ENCODE measurements at regions of chr3 and their contacts with region 1.

Region 1: GRCh38 chr3:186540221-186540834 is 3.9 kb downstream of the CRYGS start:
- DNase-seq: peak; percentile 63 to 90 (median 83)
- ATAC-seq: peak; percentile 96
- H3K4me3 ChIP-seq: no peak overlapping the region
- H3K4me3 Mint-ChIP-seq: no peak overlapping the region
- H3K27ac ChIP-seq: no peak overlapping the region
- H3K27ac Mint-ChIP-seq: peak overlapping the region; percentile 7
- H3K4me1 ChIP-seq: peaks cover 6% of the 10 kb centered on the region
- H3K4me1 Mint-ChIP-seq: peaks cover 11% of the 10 kb centered on the region
- H3K27me3 ChIP-seq: no peaks in the 10 kb centered on the region
- H3K27me3 Mint-ChIP-seq: no peaks in the 10 kb centered on the region
- CTCF ChIP-seq: peak; percentile 80

Region 2: GRCh38 chr3:185976977-185977678 is 563.2 kb before region 1 on chr3:
- CTCF ChIA-PET with region 1: interaction called, 86 read pairs
- POLR2A ChIA-PET with region 1: no interaction called
- intact Hi-C with region 1: loop called (anchors 1 kb)
- DNase-seq: peak; percentile 50 to 87 (median 79)
- ATAC-seq: peak; percentile 83
- H3K4me3 ChIP-seq: no peak overlapping the region
- H3K4me3 Mint-ChIP-seq: no peak overlapping the region
- H3K27ac ChIP-seq: no peak overlapping the region
- H3K27ac Mint-ChIP-seq: no peak overlapping the region
- H3K4me1 ChIP-seq: peaks cover 3% of the 10 kb centered on the region
- H3K4me1 Mint-ChIP-seq: peaks cover 7% of the 10 kb centered on the region
- H3K27me3 ChIP-seq: no peaks in the 10 kb centered on the region
- H3K27me3 Mint-ChIP-seq: no peaks in the 10 kb centered on the region
- CTCF ChIP-seq: peak; percentile 84

Region 3: DNA sequence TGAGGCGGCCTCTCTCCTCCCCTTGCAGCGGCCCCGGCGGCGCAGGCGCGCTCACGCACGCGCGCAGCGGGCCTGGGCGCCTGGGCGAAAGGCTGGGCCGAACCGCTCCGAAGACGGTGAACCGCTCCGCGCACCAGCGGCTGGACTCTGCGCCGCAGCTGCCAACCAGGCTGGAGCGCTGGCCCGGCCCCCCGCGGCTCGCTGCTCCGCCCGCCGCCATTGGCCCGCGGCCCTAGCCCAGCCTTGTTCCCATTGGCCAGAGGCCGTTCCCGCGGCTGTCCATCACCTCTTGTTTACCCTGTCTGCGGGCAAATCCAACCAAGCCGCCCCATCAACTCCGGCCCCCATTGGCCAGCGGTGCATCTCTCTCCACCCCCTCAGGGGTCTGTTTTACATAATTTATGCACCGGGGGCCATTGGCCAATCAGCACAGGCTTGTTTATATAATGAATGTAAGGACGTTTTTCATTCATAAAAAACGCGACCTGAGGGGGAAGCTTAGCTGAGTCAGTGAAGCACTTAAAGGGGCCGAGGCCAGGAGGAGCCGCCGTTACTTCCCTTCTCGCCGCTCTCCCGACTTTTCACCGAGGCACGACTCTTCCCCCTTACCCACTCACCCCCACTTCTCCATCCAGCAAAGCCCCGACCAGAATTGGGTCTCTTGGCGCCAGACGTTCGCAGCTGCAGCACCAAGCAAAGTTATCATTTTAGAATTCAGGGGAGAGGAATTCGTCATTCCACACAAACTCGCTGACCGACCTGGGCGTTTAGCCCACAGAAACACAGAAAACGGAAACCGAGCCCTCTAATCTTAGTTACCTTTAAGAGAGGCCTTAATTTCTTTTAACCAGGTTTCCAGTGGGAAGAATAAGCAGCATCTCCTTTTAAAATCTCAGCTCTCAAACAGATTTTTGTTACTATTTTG is 431.1 kb before region 1 on chr3 and contains the start of gene ETV5:
- CTCF ChIA-PET with region 1: interaction called, 3 read pairs
- POLR2A ChIA-PET with region 1: no interaction called
- intact Hi-C with region 1: loop called in 1 of 2 experiments (anchors 5 kb)
- DNase-seq: peak; percentile 71 to 95 (median 85)
- ATAC-seq: peak; percentile 90
- H3K4me3 ChIP-seq: peak within 1 kb of the TSS; percentile 54 to 61
- H3K4me3 Mint-ChIP-seq: peak within 1 kb of the TSS; percentile 90
- H3K27ac ChIP-seq: no peak within 1 kb of the TSS
- H3K27ac Mint-ChIP-seq: peak within 1 kb of the TSS; percentile 78
- H3K4me1 ChIP-seq: peaks cover 34% of the 10 kb centered on the region
- H3K4me1 Mint-ChIP-seq: peaks cover 36% of the 10 kb centered on the region
- H3K27me3 ChIP-seq: peaks cover 33 to 43% of the 10 kb centered on the region in 2 experiments
- H3K27me3 Mint-ChIP-seq: peaks cover 77% of the 10 kb centered on the region
- CTCF ChIP-seq: no peak
- total RNA-seq, gene ETV5: 0.08 TPM in 1 of 2 experiments, not detected in the other

Region 4: DNA sequence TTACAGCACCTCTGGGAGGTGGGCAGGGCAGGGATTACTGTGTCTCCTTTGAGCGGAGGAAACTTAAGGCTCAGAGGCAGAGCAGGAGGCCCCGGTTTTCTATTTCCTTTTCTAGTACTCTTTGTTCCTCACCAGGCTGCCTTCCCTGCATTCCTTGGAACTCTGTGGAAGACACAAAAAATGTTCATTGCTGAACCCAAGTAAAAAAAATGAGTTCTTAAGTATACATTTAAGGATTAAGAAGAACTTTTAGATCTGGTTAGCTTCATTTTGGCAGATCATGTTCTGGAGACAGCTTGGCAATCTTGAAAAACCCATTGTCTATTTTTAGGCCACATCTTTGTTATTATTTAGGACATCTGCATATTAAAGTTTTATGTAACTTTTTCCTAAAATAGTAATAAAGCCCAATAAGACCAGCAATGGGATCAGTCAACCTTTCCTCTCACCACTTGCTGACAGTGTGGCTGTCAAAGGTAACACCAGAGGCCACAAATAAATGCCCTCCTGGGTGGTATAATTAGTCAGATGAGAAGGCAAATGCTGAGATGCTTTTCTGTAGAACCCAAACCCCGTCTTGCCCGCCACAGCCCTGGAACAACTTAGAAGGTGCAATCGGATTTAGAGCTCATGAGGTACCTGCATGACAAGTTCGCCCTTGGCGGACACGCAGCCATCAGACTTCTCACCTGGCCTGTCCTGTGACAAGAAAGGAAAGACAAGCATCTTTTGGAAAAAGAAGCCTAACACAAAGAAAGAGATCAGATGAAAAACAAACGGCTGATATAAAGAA is 275.5 kb before region 1 on chr3:
- CTCF ChIA-PET with region 1: interaction called, 201 read pairs
- POLR2A ChIA-PET with region 1: interaction called, 3 read pairs
- intact Hi-C with region 1: no loop called
- DNase-seq: no peak
- ATAC-seq: no peak
- H3K4me3 ChIP-seq: no peak overlapping the region
- H3K4me3 Mint-ChIP-seq: no peak overlapping the region
- H3K27ac ChIP-seq: no peak overlapping the region
- H3K27ac Mint-ChIP-seq: no peak overlapping the region
- H3K4me1 ChIP-seq: no peaks in the 10 kb centered on the region
- H3K4me1 Mint-ChIP-seq: peaks cover 2% of the 10 kb centered on the region
- H3K27me3 ChIP-seq: no peaks in the 10 kb centered on the region
- H3K27me3 Mint-ChIP-seq: peaks cover 7% of the 10 kb centered on the region
- CTCF ChIP-seq: no peak

Region 5: DNA sequence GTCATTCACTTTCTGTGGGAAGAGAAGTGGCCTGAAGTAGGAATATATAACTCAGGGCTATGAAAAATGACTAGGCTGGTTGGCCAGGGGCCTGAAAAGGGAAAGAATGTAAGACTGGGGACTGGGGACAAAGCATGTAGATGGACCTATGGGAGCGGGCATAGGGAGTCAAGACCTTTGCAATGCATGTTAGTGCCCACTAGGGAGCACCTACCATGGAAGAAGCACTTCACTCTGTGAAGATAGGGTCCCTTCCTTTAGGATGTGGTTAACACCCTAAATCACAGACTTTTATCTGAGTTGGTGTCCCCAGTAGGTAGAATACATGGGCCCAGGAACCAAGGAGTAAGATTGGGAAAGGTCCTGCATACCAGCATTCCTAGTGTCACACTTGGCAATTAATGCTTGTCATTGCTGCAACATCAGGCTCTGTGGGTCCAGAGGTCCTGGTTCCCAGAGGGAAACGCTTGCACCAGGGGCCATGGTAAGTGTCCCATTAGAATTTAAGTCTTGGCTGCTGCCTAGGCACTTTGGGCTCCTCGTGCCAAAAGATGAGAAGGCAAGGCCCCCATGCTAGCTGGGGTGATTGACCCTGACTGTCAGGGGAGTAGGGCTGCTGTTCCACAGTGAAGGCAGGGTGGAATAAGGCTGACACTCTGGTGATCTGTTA is 75.8 kb before region 1 on chr3:
- CTCF ChIA-PET with region 1: interaction called, 7 read pairs
- POLR2A ChIA-PET with region 1: no interaction called
- intact Hi-C with region 1: loop called (anchors 2 to 5 kb)
- DNase-seq: peak in 2 of 9 experiments; percentile 15 to 30
- ATAC-seq: no peak
- H3K4me3 ChIP-seq: no peak overlapping the region
- H3K4me3 Mint-ChIP-seq: no peak overlapping the region
- H3K27ac ChIP-seq: no peak overlapping the region
- H3K27ac Mint-ChIP-seq: no peak overlapping the region
- H3K4me1 ChIP-seq: no peaks in the 10 kb centered on the region
- H3K4me1 Mint-ChIP-seq: no peaks in the 10 kb centered on the region
- H3K27me3 ChIP-seq: no peaks in the 10 kb centered on the region
- H3K27me3 Mint-ChIP-seq: no peaks in the 10 kb centered on the region
- CTCF ChIP-seq: no peak

Region 6: GRCh38 chr3:186529201-186529999 is 10.9 kb before region 1 on chr3:
- CTCF ChIA-PET with region 1: interaction called, 32 read pairs
- POLR2A ChIA-PET with region 1: no interaction called
- intact Hi-C with region 1: no loop called
- DNase-seq: no peak
- ATAC-seq: no peak
- H3K4me3 ChIP-seq: no peak overlapping the region
- H3K4me3 Mint-ChIP-seq: no peak overlapping the region
- H3K27ac ChIP-seq: no peak overlapping the region
- H3K27ac Mint-ChIP-seq: peak overlapping the region; percentile 7
- H3K4me1 ChIP-seq: peaks cover 30% of the 10 kb centered on the region
- H3K4me1 Mint-ChIP-seq: peaks cover 48% of the 10 kb centered on the region
- H3K27me3 ChIP-seq: no peaks in the 10 kb centered on the region
- H3K27me3 Mint-ChIP-seq: no peaks in the 10 kb centered on the region
- CTCF ChIP-seq: no peak

Region 7: GRCh38 chr3:186854954-186855353 is 314.6 kb after region 1 on chr3:
- CTCF ChIA-PET with region 1: no interaction called
- POLR2A ChIA-PET with region 1: no interaction called
- intact Hi-C with region 1: no loop called
- DNase-seq: no peak
- ATAC-seq: no peak
- H3K4me3 ChIP-seq: no peak overlapping the region
- H3K4me3 Mint-ChIP-seq: no peak overlapping the region
- H3K27ac ChIP-seq: no peak overlapping the region
- H3K27ac Mint-ChIP-seq: no peak overlapping the region
- H3K4me1 ChIP-seq: no peaks in the 10 kb centered on the region
- H3K4me1 Mint-ChIP-seq: peaks cover 16% of the 10 kb centered on the region
- H3K27me3 ChIP-seq: no peaks in the 10 kb centered on the region
- H3K27me3 Mint-ChIP-seq: no peaks in the 10 kb centered on the region
- CTCF ChIP-seq: no peak